PC-3 (cell line): ENCODE measurements at regions of chr16 and their contacts with region 1.

Region 1: DNA sequence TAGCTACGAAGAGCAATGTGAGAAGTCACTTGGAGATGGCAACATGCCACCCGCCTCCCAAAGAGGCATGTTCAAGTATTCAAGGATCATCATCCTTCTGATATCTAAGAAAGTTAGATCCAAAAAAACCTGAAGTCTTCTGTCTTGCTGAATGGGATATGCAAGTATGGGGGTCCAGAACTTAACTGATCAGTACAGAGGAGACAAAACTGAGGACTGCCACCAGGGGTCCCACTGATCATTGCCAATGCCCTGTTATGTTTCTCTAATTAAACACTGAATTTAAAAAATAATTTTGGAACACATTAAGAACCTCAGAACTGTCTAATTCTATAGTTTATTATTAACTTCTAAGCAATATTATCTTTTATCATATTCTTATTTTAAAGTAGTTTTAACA is 99.7 kb downstream of the CDH8 start:
- DNase-seq: peak; percentile 11
- ATAC-seq: no peak
- H3K4me3 ChIP-seq: no peak overlapping the region
- H3K27ac ChIP-seq: no peak overlapping the region
- H3K4me1 ChIP-seq: peaks cover 5% of the 10 kb centered on the region
- H3K27me3 ChIP-seq: no peaks in the 10 kb centered on the region
- CTCF ChIP-seq: peak; percentile 59

Region 2: GRCh38 chr16:61344791-61345190 is 591.7 kb before region 1 on chr16:
- CTCF ChIA-PET with region 1: no interaction called
- POLR2A ChIA-PET with region 1: no interaction called
- intact Hi-C with region 1: no loop called
- DNase-seq: no peak
- ATAC-seq: no peak
- H3K4me3 ChIP-seq: no peak overlapping the region
- H3K27ac ChIP-seq: no peak overlapping the region
- H3K4me1 ChIP-seq: no peaks in the 10 kb centered on the region
- H3K27me3 ChIP-seq: no peaks in the 10 kb centered on the region
- CTCF ChIP-seq: no peak

Region 3: DNA sequence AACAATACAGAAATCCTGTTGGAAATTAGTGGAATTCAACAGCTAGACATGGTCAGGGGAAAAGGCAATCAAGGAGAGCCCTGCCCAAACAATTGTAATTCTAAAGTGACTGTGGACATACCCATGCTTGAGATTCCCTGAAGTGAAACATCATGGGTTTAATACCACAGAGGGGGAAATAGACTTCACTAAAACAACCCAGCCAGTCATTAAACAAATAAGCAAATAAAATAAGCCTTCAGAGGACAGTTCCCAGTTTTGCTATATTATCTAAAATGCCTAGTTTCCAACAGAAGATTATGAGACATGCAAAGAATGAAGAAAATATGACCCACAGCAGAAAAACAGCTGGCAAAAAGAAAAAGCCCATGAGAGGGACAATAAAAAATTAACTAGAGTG is 276.6 kb before region 1 on chr16:
- CTCF ChIA-PET with region 1: no interaction called
- POLR2A ChIA-PET with region 1: no interaction called
- intact Hi-C with region 1: loop called (anchors 10 kb)
- DNase-seq: peak; percentile 3
- ATAC-seq: peak; percentile 73
- H3K4me3 ChIP-seq: no peak overlapping the region
- H3K27ac ChIP-seq: no peak overlapping the region
- H3K4me1 ChIP-seq: no peaks in the 10 kb centered on the region
- H3K27me3 ChIP-seq: no peaks in the 10 kb centered on the region
- CTCF ChIP-seq: no peak

Region 4: DNA sequence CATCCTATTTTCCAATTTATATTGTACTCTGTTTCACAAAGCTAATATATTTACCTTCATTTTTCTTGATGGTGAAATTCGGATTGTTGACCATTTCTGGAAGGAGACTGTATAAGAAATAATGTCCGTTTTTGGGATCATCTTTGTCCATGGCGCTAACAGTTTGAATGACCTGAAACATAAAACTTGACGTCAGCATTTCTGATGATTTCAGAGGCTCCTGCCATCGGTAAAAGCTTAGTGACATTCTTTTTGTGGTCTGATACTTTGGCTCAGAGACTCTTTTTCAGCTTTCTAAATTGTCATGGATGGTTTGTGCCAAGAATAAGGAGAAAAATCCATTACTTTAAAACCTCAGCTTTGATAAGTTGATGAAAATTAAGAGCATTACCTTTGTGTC is 222.7 kb before region 1 on chr16:
- CTCF ChIA-PET with region 1: no interaction called
- POLR2A ChIA-PET with region 1: no interaction called
- intact Hi-C with region 1: loop called (anchors 5 kb)
- DNase-seq: no peak
- ATAC-seq: no peak
- H3K4me3 ChIP-seq: no peak overlapping the region
- H3K27ac ChIP-seq: no peak overlapping the region
- H3K4me1 ChIP-seq: no peaks in the 10 kb centered on the region
- H3K27me3 ChIP-seq: no peaks in the 10 kb centered on the region
- CTCF ChIP-seq: no peak

Region 5: DNA sequence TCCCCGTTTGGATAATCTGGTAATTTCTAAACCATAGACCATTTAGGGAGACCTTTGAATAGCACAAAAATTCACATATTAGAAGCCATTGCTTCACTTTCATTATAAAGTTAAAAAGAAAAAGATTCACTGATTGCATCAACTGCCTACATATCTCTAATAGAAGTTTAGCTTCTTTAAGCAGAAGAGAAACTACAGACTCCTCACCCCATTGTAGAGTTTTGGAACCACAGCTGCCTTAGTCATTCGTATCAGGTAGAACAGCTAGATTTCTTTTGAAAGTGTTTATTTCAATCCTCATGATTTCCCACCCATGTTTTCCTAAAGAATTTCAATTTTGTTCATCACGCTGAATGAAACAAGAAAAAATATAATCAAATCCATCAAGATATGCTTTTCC is 45.1 kb before region 1 on chr16:
- CTCF ChIA-PET with region 1: no interaction called
- POLR2A ChIA-PET with region 1: no interaction called
- intact Hi-C with region 1: loop called (anchors 5 kb)
- DNase-seq: no peak
- ATAC-seq: no peak
- H3K4me3 ChIP-seq: no peak overlapping the region
- H3K27ac ChIP-seq: no peak overlapping the region
- H3K4me1 ChIP-seq: peaks cover 26% of the 10 kb centered on the region
- H3K27me3 ChIP-seq: no peaks in the 10 kb centered on the region
- CTCF ChIP-seq: no peak

Region 6: GRCh38 chr16:61993076-61993475 is 56.6 kb after region 1 on chr16:
- CTCF ChIA-PET with region 1: no interaction called
- POLR2A ChIA-PET with region 1: no interaction called
- intact Hi-C with region 1: no loop called
- DNase-seq: no peak
- ATAC-seq: no peak
- H3K4me3 ChIP-seq: no peak overlapping the region
- H3K27ac ChIP-seq: no peak overlapping the region
- H3K4me1 ChIP-seq: no peaks in the 10 kb centered on the region
- H3K27me3 ChIP-seq: 0 out of 2 replicates have a peak, but pooled peaks cover 5% of the 10 kb centered on the region
- CTCF ChIP-seq: no peak